Heart right ventricle (tissue), 16 donors: ENCODE measurements at regions of chr19 and their contacts with region 1.

Region 1: GRCh38 chr19:3434712-3435553 is 45.4 kb downstream of the SMIM24 start:
- DNase-seq: peak; percentile 97
- ATAC-seq: peak; percentile 93 to 98 (median 97)
- H3K4me3 ChIP-seq: peak overlapping the region; percentile 12 to 60 (median 52)
- H3K27ac ChIP-seq: peak overlapping the region; percentile 75 to 94 (median 88)
- H3K4me1 ChIP-seq: peaks cover 6 to 45% (median 29%) of the 10 kb centered on the region in 9 donors
- H3K27me3 ChIP-seq: no peaks in the 10 kb centered on the region
- CTCF ChIP-seq: no peak

Region 2: GRCh38 chr19:3336680-3337523 is 98.0 kb before region 1 on chr19:
- intact Hi-C with region 1: loop called in 1 of 10 experiments (anchors 5 kb)
- DNase-seq: peak; percentile 83 to 87
- ATAC-seq: peak; percentile 87 to 97 (median 94)
- H3K4me3 ChIP-seq: no peak overlapping the region
- H3K27ac ChIP-seq: peak overlapping the region; percentile 83 to 97 (median 92)
- H3K4me1 ChIP-seq: peaks cover 20 to 40% (median 34%) of the 10 kb centered on the region in 9 donors
- H3K27me3 ChIP-seq: no peaks in the 10 kb centered on the region
- CTCF ChIP-seq: no peak

Region 3: DNA sequence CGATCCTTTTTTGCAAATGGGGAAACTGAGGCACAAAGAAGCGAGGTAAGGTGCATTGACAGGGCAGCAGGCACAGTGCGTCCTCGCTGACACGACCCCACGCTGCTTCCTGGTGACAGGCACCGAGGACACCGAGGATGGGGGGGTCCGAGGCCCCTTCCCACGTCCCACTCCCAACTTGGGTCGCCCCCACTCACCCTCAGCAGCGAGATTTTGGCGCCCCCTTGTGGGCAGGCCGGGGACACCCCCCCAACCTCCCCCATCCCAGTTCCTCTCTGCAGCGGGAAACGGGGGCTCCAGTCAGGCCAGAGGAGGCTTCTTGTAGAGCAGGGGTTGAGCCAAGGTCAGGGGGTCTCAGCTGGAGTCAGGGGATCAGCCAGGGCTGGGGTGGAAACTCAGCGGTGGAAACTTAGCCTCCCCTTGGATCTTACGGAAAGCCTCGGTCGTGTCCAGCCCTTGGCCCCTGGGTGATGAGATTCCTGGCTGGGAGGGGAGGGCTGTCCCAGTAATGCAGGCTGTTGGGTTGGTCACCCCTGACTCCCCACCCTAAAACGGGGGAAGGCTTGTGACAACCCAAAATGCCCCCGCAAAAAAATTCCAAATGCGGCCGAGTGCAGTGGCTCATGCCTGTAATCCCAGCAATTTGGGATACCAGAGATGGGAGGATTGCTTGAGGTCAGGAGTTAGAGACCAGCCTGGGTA is 37.2 kb after region 1 on chr19:
- intact Hi-C with region 1: loop called in 3 of 10 experiments (anchors 5 kb)
- DNase-seq: peak; percentile 34 to 58
- ATAC-seq: peak; percentile 35 to 74 (median 64)
- H3K4me3 ChIP-seq: no peak overlapping the region
- H3K27ac ChIP-seq: no peak overlapping the region
- H3K4me1 ChIP-seq: peaks cover 3 to 36% (median 10%) of the 10 kb centered on the region in 9 donors
- H3K27me3 ChIP-seq: peaks cover 0 to 5% (median 0%) of the 10 kb centered on the region in 7 donors
- CTCF ChIP-seq: peak; percentile 83 to 95 (median 89)